Mammary epithelial cell (primary cell): ENCODE measurements at regions of chr6 and their contacts with region 1.

Region 1: DNA sequence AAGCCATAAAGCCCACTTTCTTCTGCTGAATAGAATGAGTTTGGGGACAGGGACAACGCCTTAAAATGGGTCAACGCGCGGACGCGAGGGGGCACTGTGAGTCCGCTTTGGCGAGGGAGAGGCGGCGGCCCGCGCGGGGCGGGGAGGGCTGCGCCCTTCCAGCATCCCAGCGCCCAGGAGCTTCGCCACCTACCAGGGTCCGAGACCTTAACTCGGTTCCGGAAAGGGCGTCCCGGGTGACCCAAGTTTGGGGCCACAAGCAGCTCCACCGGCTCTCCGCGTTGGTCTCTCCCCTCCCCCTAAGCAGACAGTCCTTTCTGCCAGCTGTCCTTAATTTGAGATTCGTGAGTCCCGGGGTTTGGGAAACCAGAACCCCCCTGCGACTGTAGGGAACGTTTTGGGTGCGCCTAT is 1.8 kb upstream of the SAMD5 start:
- DNase-seq: peak; percentile 39
- H3K4me3 ChIP-seq: peak overlapping the region in 2 of 3 experiments; percentile 40 to 79
- H3K27ac ChIP-seq: no peak overlapping the region
- H3K4me1 ChIP-seq: peaks cover 17% of the 10 kb centered on the region
- H3K27me3 ChIP-seq: peaks cover 4% of the 10 kb centered on the region
- CTCF ChIP-seq: peak; percentile 56 to 91

Region 2: GRCh38 chr6:147459780-147460179 is 46.9 kb before region 1 on chr6:
- CTCF ChIA-PET with region 1: no interaction called
- dilution Hi-C with region 1: no loop called
- in situ Hi-C with region 1: no loop called
- intact Hi-C with region 1: no loop called
- DNase-seq: no peak
- H3K4me3 ChIP-seq: no peak overlapping the region
- H3K27ac ChIP-seq: no peak overlapping the region
- H3K4me1 ChIP-seq: no peaks in the 10 kb centered on the region
- H3K27me3 ChIP-seq: peaks cover 2% of the 10 kb centered on the region
- CTCF ChIP-seq: no peak

Region 3: DNA sequence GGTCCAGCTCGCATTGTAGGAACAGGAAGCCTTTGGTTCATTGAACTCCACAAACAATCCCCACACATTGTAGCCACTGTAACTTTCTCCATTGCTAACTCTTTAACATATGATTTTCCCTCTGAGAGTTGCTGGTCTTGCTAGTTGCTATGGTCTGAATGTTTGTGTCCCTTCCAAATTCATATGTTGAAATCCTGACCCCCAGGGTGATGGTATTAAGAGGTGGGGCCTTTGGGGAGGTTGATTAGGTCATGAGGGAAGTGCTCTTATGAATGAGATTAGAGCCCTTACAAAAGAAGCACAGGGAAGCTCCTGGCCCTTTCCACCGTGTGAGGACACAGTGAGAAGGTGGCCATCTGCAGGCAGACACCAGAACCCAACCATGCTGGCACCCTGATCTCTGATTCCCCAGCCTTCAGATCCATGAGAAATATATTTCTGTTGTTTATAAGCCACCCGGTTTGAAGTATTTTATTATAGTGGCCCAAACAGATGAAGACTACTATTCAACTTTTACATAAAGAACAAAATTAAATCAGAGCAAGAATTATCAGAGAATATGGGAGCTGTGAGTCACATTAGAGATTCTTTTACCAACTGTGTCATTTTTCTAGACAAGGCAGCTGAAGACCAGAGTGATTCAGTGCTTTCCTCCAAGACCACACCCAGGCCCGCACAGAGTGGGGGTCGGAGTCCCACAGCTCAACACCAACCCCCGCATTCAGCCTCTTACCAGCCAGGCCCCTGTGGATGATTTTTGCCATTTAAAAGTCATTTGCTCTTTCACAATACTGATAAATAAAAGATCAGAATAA is 144.7 kb after region 1 on chr6:
- CTCF ChIA-PET with region 1: no interaction called
- dilution Hi-C with region 1: no loop called
- in situ Hi-C with region 1: no loop called
- intact Hi-C with region 1: loop called (anchors 1 kb)
- DNase-seq: no peak
- H3K4me3 ChIP-seq: no peak overlapping the region
- H3K27ac ChIP-seq: no peak overlapping the region
- H3K4me1 ChIP-seq: no peaks in the 10 kb centered on the region
- H3K27me3 ChIP-seq: no peaks in the 10 kb centered on the region
- CTCF ChIP-seq: peak in 1 of 2 donors; percentile 45

Region 4: GRCh38 chr6:148144917-148145521 is 638.3 kb after region 1 on chr6:
- CTCF ChIA-PET with region 1: no interaction called
- dilution Hi-C with region 1: loop called (anchors 25 kb)
- in situ Hi-C with region 1: loop called in 1 of 2 experiments (anchors 10 kb)
- intact Hi-C with region 1: loop called (anchors 5 kb)
- DNase-seq: peak; percentile 34
- H3K4me3 ChIP-seq: peak overlapping the region in 1 of 3 experiments; percentile 25
- H3K27ac ChIP-seq: no peak overlapping the region
- H3K4me1 ChIP-seq: peaks cover 9% of the 10 kb centered on the region
- H3K27me3 ChIP-seq: no peaks in the 10 kb centered on the region
- CTCF ChIP-seq: peak; percentile 88 to 89

Region 5: GRCh38 chr6:148166339-148166968 is 659.7 kb after region 1 on chr6:
- CTCF ChIA-PET with region 1: interaction called, 13 read pairs
- dilution Hi-C with region 1: loop called (anchors 25 kb)
- in situ Hi-C with region 1: loop called in 1 of 2 experiments (anchors 10 kb)
- intact Hi-C with region 1: loop called (anchors 1 kb)
- DNase-seq: peak; percentile 39
- H3K4me3 ChIP-seq: no peak overlapping the region
- H3K27ac ChIP-seq: no peak overlapping the region
- H3K4me1 ChIP-seq: no peaks in the 10 kb centered on the region
- H3K27me3 ChIP-seq: no peaks in the 10 kb centered on the region
- CTCF ChIP-seq: peak; percentile 56 to 66

Region 6: DNA sequence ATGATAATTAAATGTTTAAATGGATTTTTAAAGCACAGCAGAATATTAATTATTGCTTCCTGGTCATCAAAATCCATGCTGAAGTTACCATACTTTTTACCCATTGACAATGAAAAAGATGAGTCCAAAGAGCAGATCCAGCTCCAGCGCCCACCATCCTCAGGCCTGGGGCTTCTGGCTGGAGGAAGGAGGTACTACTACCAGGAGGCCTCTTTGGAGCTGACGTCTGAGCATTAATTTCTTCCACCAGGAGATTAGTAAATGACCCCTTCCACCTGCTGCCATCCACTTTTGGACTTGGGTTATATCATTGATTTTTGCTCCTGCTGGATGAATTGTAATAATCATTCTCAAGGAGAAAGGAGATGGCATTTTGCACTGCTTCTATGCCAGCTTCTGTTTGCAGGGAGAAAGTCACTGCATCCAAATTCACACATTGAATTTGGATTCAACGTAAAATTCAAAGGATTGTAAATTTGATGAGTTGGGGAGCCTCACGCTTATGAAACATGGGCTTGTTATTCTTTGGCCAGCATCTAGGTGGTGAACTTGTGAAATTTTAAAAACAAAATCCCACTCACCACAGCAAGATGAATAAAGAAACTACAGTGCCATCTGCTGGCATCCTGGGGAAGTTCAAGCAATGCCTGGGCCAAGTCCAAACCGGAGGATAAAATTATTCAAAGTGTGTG is 957.8 kb after region 1 on chr6:
- CTCF ChIA-PET with region 1: no interaction called
- dilution Hi-C with region 1: no loop called
- in situ Hi-C with region 1: loop called in 1 of 2 experiments (anchors 25 kb)
- intact Hi-C with region 1: loop called (anchors 5 kb)
- DNase-seq: peak; percentile 42
- H3K4me3 ChIP-seq: no peak overlapping the region
- H3K27ac ChIP-seq: no peak overlapping the region
- H3K4me1 ChIP-seq: no peaks in the 10 kb centered on the region
- H3K27me3 ChIP-seq: no peaks in the 10 kb centered on the region
- CTCF ChIP-seq: peak; percentile 85 to 97